Thyroid gland (tissue), 4 donors: ENCODE measurements at regions of chr3 and their contacts with region 1.

Region 1: GRCh38 chr3:133384331-133385027 is 15.4 kb upstream of the BFSP2 start:
- DNase-seq: peak; percentile 78 to 82
- H3K4me3 ChIP-seq: no peak overlapping the region
- H3K27ac ChIP-seq: no peak overlapping the region
- H3K4me1 ChIP-seq: peaks cover 6 to 21% of the 10 kb centered on the region in 2 donors
- H3K27me3 ChIP-seq: no peaks in the 10 kb centered on the region
- CTCF ChIP-seq: peak; percentile 46 to 96 (median 94)
- POLR2A ChIP-seq: no peak

Region 2: GRCh38 chr3:133038110-133039040 is 346.1 kb before region 1 on chr3 and contains the start of gene TMEM108:
- intact Hi-C with region 1: loop called (anchors 5 kb)
- DNase-seq: peak; percentile 86 to 88
- H3K4me3 ChIP-seq: peak within 1 kb of the TSS; percentile 21 to 56 (median 44)
- H3K27ac ChIP-seq: peak within 1 kb of the TSS in 2 of 3 donors; percentile 38 to 48
- H3K4me1 ChIP-seq: peaks cover 15 to 18% of the 10 kb centered on the region in 2 donors
- H3K27me3 ChIP-seq: no peaks in the 10 kb centered on the region
- CTCF ChIP-seq: no peak
- POLR2A ChIP-seq: peak in 1 of 2 donors; percentile 51
- total RNA-seq, gene TMEM108: 2.6 to 9.2 (median 4.6) TPM